ENCODE measurements at regions of chr6 and their contacts with region 1.

Region 1: DNA sequence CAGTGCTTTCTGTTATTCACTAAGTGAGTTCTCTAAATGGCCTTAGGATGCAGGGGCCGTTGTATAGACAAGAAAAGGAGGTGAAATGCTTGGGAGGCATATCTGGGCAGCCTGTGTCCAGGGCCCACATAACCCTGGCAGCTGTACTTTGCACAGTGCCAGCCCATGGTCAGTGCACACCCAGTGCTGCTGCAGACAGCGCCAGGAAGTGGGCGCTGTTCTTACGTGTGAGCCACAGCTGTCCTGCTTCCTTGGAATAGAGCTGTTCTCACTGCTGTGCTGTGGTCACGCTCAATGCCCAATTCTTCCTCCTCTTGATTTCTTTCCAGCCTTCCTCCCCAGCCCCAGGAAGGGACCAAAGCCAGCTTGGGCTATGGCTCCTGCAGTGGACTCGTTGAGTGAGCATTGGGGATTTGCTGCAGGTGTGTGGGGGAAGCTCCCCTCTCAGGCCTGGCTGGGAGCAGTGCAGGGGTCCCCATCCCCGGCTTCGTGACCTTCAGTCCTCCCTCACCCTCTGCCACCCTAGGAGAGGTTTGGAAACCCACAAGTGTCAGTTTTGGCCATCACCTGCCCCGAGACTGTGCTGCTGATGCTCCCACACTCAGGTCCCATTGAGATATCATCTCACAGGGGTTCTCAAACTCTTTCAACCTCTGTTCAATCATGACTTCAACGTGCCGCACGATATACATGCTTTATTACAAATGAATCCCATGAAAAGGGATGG is 246.8 kb upstream of the EXOC2 start:
- DNase-seq: no peak
- ATAC-seq: no peak
- H3K4me3 ChIP-seq: no peak overlapping the region
- H3K27ac ChIP-seq: no peak overlapping the region
- H3K4me1 ChIP-seq: no peaks in the 10 kb centered on the region
- H3K27me3 ChIP-seq: peaks cover 23% of the 10 kb centered on the region
- CTCF ChIP-seq: no peak
- POLR2A ChIP-seq: no peak
- RAD21 ChIP-seq: no peak

Region 2: GRCh38 chr6:1144842-1145767 is 205.4 kb after region 1 on chr6:
- CTCF ChIA-PET with region 1: no interaction called
- POLR2A ChIA-PET with region 1: no interaction called
- dilution Hi-C with region 1: no loop called
- in situ Hi-C with region 1: no loop called
- intact Hi-C with region 1: loop called (anchors 10 kb)
- DNase-seq: peak; percentile 76
- ATAC-seq: no peak; the same call in 1 of the 2 replicates
- H3K4me3 ChIP-seq: no peak overlapping the region
- H3K27ac ChIP-seq: peak overlapping the region; percentile 22; the same call in 1 of the 2 replicates
- H3K4me1 ChIP-seq: peaks cover 11% of the 10 kb centered on the region
- H3K27me3 ChIP-seq: peaks cover under 1% of the 10 kb centered on the region
- CTCF ChIP-seq: no peak
- POLR2A ChIP-seq: no peak
- RAD21 ChIP-seq: no peak

Measured in IMR-90 (cell line).